Heart right ventricle (tissue), 16 donors: ENCODE measurements at regions of chr17 and their contacts with region 1.

Region 1: DNA sequence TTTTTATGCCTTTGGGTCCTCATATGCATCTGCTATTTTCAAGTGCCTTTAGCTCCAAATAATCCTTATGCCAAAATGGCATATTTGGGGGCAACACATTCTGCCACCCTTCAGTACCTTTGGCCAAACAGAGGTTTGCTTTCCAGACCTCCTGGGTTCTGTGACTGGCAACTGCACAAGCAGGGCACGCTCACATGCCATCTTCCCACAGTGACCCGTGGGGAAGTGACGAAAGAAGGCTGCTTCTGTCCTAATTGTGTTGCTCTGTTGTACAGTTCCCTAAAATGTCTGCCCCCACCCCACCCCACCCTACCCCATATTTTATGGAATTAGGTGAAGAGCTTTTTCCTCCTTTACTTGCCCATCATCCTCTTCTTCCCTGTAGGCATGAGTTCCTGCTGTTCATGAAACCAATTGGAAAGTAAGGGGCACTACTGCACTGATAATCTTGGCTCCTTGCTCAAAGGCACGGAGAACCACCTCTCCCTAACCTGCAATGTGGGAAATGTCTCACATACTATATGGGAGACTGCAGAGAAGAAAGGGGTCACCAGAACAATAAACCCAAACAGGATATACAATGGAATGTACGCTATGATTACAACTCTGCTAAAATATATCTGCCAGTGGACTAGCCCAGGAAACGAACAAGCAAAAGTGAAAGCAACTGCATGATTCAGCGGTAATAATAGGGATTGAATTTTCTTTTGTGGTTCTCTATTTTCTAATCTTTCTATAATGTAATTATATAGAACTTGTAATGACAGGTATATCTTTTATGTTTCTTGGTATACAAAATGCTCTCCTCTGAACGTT is 3.3 kb upstream of the SLFN12L start:
- DNase-seq: peak in 1 of 2 donors; percentile 35
- ATAC-seq: peak in 7 of 8 donors; percentile 39 to 70 (median 57)
- H3K4me3 ChIP-seq: peak overlapping the region in 9 of 10 donors; percentile 10 to 46 (median 42)
- H3K27ac ChIP-seq: peak overlapping the region; percentile 4 to 88 (median 71)
- H3K4me1 ChIP-seq: peaks cover 3 to 68% (median 39%) of the 10 kb centered on the region in 9 donors
- H3K27me3 ChIP-seq: no peaks in the 10 kb centered on the region
- CTCF ChIP-seq: no peak

Region 2: DNA sequence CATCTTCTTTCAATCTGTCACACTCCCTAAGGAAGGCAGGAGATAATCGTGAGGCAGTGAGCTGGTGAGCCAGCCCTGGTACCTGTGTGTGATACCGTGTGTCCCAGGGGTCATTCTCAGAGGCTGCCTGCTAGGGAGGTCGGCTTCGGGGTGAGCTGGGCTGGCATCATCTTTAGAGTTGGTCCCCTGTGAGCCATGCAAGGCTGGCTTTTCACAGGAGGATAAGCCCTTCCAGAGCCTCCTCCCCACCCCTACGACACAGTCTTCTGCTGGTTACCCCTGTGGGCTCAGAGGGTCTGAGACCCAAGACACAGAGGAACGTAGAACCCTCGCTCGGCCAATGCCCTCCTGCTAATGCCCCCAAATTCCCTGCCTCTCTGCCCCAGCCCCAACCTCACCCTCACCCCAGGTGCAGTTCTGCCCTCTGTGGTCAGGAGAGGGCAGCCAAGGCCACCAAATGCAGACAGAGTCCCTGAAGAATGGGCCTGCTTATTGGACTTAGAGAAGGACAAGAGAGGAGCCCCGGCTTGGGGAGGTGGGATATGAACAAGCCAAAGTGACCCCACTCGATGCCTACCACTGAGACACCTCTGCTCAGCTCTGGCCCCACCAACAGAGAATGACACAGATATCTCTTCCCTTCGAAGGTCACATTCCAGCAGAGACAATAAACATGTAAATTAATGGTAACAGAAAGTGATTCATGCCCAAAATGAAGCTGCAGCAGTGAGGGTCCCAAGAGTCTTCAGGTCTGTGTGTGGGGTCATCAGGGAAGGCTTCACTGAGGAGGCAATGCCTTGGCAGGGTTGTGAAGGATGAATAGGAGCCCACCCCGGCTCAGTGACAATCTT is 1097.0 kb before region 1 on chr17:
- intact Hi-C with region 1: loop called in 1 of 10 experiments (anchors 5 kb)
- DNase-seq: peak; percentile 25 to 30
- ATAC-seq: peak in 6 of 8 donors; percentile 53 to 78 (median 66)
- H3K4me3 ChIP-seq: no peak overlapping the region
- H3K27ac ChIP-seq: no peak overlapping the region
- H3K4me1 ChIP-seq: peaks cover 0 to 7% (median 0%) of the 10 kb centered on the region in 9 donors
- H3K27me3 ChIP-seq: peaks cover 0 to 22% (median 12%) of the 10 kb centered on the region in 7 donors
- CTCF ChIP-seq: peak in 8 of 9 donors; percentile 7 to 63 (median 46)

Region 3: GRCh38 chr17:35170968-35171771 is 369.6 kb before region 1 on chr17:
- intact Hi-C with region 1: loop called in 7 of 10 experiments (anchors 2 to 10 kb)
- DNase-seq: no peak
- ATAC-seq: peak in 3 of 8 donors; percentile 16 to 46 (median 32)
- H3K4me3 ChIP-seq: no peak overlapping the region
- H3K27ac ChIP-seq: no peak overlapping the region
- H3K4me1 ChIP-seq: peaks cover 0 to 15% (median 0%) of the 10 kb centered on the region in 9 donors
- H3K27me3 ChIP-seq: no peaks in the 10 kb centered on the region
- CTCF ChIP-seq: peak in 7 of 9 donors; percentile 32 to 56 (median 41)

Region 4: DNA sequence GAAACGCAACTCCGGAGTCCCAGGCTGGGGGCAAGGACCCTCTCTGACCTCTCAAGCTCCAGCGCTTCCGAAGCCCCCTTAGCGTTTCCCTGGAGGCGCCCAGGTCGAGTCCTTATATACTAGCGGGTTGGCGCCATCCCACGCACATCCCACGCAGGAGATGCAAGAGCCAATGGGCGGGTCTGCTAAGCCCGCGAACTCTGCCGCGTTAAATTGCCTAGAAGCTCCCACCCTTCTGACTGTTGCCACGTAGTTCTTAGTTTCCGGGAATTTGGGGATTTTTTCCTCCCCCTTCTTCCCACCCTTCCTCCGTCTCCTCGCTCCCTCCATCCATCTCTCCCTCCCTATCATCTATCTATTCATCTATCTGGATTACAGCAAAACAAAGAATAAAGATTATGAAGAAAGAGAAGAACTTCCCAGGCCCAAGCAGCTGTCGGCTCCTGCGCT is 167.2 kb before region 1 on chr17 and contains the start of gene SLFN11:
- intact Hi-C with region 1: loop called in 2 of 10 experiments (anchors 10 kb)
- DNase-seq: peak; percentile 83 to 92
- ATAC-seq: peak; percentile 96 to 98 (median 96)
- H3K4me3 ChIP-seq: peak within 1 kb of the TSS; percentile 50 to 76 (median 70)
- H3K27ac ChIP-seq: peak within 1 kb of the TSS; percentile 93 to 99 (median 97)
- H3K4me1 ChIP-seq: peaks cover 0 to 71% (median 20%) of the 10 kb centered on the region in 9 donors
- H3K27me3 ChIP-seq: peaks cover 0 to 17% (median 0%) of the 10 kb centered on the region in 7 donors
- CTCF ChIP-seq: no peak
- total RNA-seq, gene SLFN11: 11.5 to 25.7 (median 18.5) TPM

Region 5: DNA sequence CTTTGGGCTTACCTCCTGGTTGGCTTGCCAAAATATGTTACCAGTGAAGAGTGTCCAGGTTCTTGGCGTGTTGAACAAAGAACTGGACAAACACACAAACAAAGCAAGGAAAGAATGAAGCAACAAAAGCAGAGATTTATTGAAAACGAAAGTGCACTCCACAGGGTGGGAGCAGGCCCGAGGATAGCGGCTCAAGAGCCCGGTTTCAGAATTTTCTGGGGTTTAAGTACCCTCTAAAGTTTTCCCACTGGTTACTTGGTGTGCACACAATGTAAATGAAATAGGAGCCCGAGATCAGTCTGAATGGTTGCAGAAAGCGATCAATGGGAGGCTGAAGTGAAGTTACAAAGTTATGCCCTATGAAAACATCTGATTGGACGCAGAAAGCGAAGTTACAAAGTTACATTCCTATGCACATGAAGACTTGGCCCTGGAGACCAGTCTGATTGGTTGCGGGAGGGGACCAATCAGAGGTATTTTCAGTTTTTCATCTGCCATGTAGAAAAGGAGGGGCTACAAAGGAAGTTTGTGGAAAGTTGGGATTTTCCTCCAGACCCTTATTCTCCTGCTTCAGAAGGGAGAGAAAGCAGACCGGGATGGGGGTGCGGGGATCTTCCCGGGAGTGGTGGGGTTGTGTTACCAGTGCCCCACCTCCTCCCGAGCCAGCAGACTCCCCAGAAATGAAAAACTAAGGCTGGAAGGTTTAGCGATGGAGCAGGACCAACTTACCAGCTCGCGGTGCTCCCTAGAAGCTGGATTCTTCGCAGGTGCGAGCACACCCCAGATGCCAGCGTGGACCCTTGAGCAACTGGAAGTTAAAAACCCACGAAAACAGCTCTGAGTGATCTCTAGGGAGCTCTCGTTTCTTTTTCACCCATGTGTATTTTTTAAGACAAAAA is 108.4 kb before region 1 on chr17 and contains the start of gene SLFN12:
- intact Hi-C with region 1: loop called in 1 of 10 experiments (anchors 10 kb)
- DNase-seq: peak in 1 of 2 donors; percentile 79
- ATAC-seq: peak; percentile 87 to 96 (median 92)
- H3K4me3 ChIP-seq: peak within 1 kb of the TSS; percentile 50 to 73 (median 64)
- H3K27ac ChIP-seq: peak within 1 kb of the TSS; percentile 83 to 95 (median 92)
- H3K4me1 ChIP-seq: peaks cover 0 to 52% (median 27%) of the 10 kb centered on the region in 9 donors
- H3K27me3 ChIP-seq: peaks cover 0 to 2% (median 0%) of the 10 kb centered on the region in 7 donors
- CTCF ChIP-seq: no peak
- total RNA-seq, gene SLFN12: 2.0 to 7.8 (median 4.0) TPM

Region 6: GRCh38 chr17:35460354-35460851 is 80.4 kb before region 1 on chr17:
- intact Hi-C with region 1: no loop called
- DNase-seq: peak; percentile 13 to 23
- ATAC-seq: peak; percentile 58 to 87 (median 66)
- H3K4me3 ChIP-seq: peak overlapping the region in 9 of 10 donors; percentile 6 to 53 (median 45)
- H3K27ac ChIP-seq: no peak overlapping the region
- H3K4me1 ChIP-seq: peaks cover 0 to 11% (median 3%) of the 10 kb centered on the region in 9 donors
- H3K27me3 ChIP-seq: peaks cover 0 to 62% (median 36%) of the 10 kb centered on the region in 7 donors
- CTCF ChIP-seq: no peak

Region 7: GRCh38 chr17:35496470-35497290 is 44.1 kb before region 1 on chr17:
- intact Hi-C with region 1: no loop called
- DNase-seq: no peak
- ATAC-seq: no peak
- H3K4me3 ChIP-seq: peak overlapping the region in 4 of 10 donors; percentile 14 to 25 (median 20)
- H3K27ac ChIP-seq: no peak overlapping the region
- H3K4me1 ChIP-seq: peaks cover 0 to 21% (median 7%) of the 10 kb centered on the region in 9 donors
- H3K27me3 ChIP-seq: peaks cover 11 to 99% (median 94%) of the 10 kb centered on the region in 7 donors
- CTCF ChIP-seq: no peak